ENCODE measurements at regions of chr15 and their contacts with region 1.

Region 1: GRCh38 chr15:25790000-25790660 is 73.0 kb downstream of the ATP10A start:
- DNase-seq: peak; percentile 76
- H3K4me3 Mint-ChIP-seq: peak overlapping the region; percentile 20
- H3K27ac Mint-ChIP-seq: peak overlapping the region; percentile 85
- H3K4me1 Mint-ChIP-seq: peaks cover 66% of the 10 kb centered on the region
- H3K27me3 Mint-ChIP-seq: no peaks in the 10 kb centered on the region

Region 2: DNA sequence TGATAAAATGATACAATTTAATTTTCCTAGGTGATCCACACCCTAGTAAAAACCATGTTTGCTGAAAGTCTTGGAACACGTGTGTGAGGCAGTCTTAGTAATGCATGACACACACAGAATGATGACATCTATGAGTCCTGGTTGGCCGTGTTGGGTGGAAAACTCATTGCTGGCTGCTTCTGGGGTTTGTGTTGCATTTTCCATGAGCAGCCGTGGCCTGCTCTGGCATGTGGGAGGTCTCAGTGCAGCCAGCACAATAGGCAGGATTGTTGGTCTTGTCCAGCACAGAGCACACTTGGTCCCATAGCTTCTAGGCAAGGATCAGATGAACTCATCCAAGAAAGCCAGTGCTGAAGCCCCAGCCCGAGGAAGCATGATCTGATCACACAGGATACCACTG is 178.5 kb before region 1 on chr15:
- CTCF ChIA-PET with region 1: no interaction called
- intact Hi-C with region 1: no loop called
- DNase-seq: no peak
- H3K4me3 Mint-ChIP-seq: no peak overlapping the region
- H3K27ac Mint-ChIP-seq: no peak overlapping the region
- H3K4me1 Mint-ChIP-seq: no peaks in the 10 kb centered on the region
- H3K27me3 Mint-ChIP-seq: peaks cover 6% of the 10 kb centered on the region

Region 3: DNA sequence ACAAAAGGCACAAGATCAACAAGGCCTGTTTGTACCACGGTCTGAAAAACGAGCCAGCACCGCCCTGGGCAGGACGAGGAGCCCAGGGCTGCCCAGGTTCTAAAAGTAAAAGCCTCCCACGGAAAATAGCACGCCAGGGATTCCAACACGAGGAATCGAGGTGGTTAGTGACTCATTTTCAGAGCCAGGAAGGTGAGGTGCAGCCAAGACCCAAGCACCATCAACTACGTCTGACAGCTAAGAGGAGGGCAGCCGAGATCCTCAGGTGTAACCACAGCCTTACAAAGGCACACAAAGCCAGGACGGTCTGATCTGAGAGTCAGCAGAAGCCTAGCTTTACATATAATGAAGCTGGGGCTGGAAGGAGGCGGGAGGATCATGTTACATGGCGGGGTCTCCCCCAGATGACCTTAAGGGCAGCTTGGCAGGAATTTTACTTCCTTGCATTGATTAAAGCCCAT is 20.5 kb after region 1 on chr15:
- CTCF ChIA-PET with region 1: interaction called, 3 read pairs
- intact Hi-C with region 1: loop called (anchors 1 kb)
- DNase-seq: peak; percentile 50
- H3K4me3 Mint-ChIP-seq: peak overlapping the region; percentile 9
- H3K27ac Mint-ChIP-seq: peak overlapping the region; percentile 82
- H3K4me1 Mint-ChIP-seq: peaks cover 73% of the 10 kb centered on the region
- H3K27me3 Mint-ChIP-seq: no peaks in the 10 kb centered on the region

Region 4: DNA sequence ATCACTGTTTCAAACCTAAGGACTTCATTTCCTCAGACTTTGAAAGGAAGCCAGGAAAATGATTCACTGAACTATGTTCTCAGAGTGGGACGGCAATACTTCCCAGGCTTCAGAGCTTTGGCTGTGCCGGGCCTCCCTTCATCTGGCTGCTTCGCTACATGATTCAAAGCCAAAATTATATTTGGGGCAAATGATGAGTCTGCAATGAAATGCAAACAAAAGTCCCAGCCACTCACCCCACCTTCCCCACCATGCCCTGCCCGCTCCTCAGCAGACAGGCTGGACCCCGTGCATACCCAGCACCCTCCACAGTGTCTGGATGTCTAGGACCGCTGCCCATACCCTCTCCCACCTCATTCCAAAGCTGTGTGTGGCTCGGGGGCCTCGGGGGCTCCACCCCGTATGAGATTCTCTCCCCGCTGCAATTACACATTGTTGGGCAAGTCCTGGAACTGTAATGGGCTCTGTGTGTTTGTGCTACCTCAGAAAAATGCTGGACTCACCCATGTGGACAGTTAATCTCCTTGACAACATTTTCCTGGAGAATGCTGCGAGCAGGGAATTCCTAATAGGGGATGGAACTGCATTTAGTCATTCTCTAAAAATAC is 40.8 kb after region 1 on chr15:
- CTCF ChIA-PET with region 1: no interaction called
- intact Hi-C with region 1: loop called (anchors 1 kb)
- DNase-seq: no peak
- H3K4me3 Mint-ChIP-seq: no peak overlapping the region
- H3K27ac Mint-ChIP-seq: no peak overlapping the region
- H3K4me1 Mint-ChIP-seq: peaks cover 37% of the 10 kb centered on the region
- H3K27me3 Mint-ChIP-seq: no peaks in the 10 kb centered on the region

Region 5: DNA sequence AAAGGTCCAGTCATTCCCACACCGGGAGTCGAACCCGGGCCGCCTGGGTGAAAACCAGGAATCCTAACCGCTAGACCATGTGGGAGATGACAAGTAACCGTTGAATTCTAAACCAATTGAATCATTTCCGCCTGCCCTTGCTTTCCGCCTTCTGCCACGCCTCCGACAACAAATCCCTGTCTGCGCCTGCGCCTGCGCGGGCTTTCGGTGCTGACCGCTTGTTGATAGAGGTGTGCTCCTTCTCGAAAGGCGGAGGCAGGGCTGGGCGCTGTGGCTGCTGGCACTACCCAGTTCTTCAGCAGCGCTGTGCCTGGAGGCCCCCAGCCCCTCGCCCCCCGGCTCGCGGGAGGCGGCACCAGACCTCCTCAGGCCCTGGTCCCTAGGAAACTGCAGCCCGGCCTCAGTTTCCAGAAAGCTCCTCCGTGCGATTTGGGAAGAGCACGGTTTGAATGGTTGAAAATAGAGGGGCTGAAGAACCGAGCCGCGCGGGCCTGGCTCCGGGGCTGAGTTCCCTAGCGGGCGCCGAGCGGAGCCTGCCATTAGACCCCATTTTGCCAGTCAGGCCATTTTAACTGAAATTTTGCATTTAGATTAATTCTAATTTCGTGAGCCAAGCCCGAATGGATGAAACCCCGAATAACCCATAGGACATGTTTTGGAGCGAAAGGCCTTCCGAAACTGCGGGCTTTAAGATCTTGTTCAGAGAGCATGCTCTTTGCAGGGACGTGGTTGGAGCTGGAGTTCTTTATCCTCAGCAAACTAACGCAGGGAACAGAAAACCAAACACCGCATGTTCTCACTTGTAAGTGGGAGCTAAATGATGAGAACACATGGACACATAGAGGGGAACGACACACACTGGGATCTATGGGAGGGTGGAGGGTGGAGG is 292.3 kb after region 1 on chr15:
- CTCF ChIA-PET with region 1: no interaction called
- intact Hi-C with region 1: loop called (anchors 5 kb)
- DNase-seq: peak; percentile 96
- H3K4me3 Mint-ChIP-seq: peak overlapping the region; percentile 83
- H3K27ac Mint-ChIP-seq: peak overlapping the region; percentile 92
- H3K4me1 Mint-ChIP-seq: peaks cover 29% of the 10 kb centered on the region
- H3K27me3 Mint-ChIP-seq: peaks cover 2% of the 10 kb centered on the region